PC-9 (cell line): ENCODE measurements at regions of chr20 and their contacts with region 1.

Region 1: GRCh38 chr20:48904365-48905296 is 16.9 kb upstream of the ARFGEF2 start:
- DNase-seq: peak; percentile 75
- H3K4me3 ChIP-seq: no peak overlapping the region
- H3K27ac ChIP-seq: no peak overlapping the region
- H3K4me1 ChIP-seq: peaks cover 24% of the 10 kb centered on the region
- H3K27me3 ChIP-seq: no peaks in the 10 kb centered on the region
- CTCF ChIP-seq: peak; percentile 98

Region 2: GRCh38 chr20:47438577-47439381 is 1465.9 kb before region 1 on chr20:
- CTCF ChIA-PET with region 1: interaction called, 27 read pairs
- POLR2A ChIA-PET with region 1: no interaction called
- intact Hi-C with region 1: no loop called
- DNase-seq: peak; percentile 67 to 94
- H3K4me3 ChIP-seq: 0 out of 2 replicates have a peak overlapping the region, but pooled peaks have one; percentile 1
- H3K27ac ChIP-seq: peak overlapping the region; percentile 78
- H3K4me1 ChIP-seq: peaks cover 58% of the 10 kb centered on the region
- H3K27me3 ChIP-seq: no peaks in the 10 kb centered on the region
- CTCF ChIP-seq: no peak

Region 3: DNA sequence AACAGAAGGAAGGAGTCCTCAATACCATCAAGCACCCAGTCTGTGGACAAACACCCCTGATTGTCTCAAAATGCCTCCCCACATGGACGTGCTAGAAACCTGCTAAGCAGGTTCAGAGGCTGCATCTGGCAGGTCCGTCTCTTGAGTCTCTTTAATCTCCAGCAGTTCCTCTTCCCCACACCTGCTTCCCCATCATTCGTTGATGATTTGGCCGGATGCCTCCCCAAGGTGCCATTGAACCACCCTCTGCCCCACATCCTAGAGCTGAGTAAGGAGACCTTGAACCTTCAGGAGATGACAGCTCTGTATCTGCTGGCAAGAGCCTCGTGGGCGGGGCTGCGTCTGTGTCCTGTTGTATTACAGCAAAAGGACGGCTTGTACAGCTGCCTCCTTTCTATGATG is 256.1 kb before region 1 on chr20:
- CTCF ChIA-PET with region 1: interaction called, 3 read pairs
- POLR2A ChIA-PET with region 1: interaction called, 13 read pairs
- intact Hi-C with region 1: no loop called
- DNase-seq: peak; percentile 50 to 74
- H3K4me3 ChIP-seq: no peak overlapping the region
- H3K27ac ChIP-seq: no peak overlapping the region
- H3K4me1 ChIP-seq: peaks cover 12% of the 10 kb centered on the region
- H3K27me3 ChIP-seq: no peaks in the 10 kb centered on the region
- CTCF ChIP-seq: no peak

Region 4: GRCh38 chr20:48674461-48674860 is 230.2 kb before region 1 on chr20:
- CTCF ChIA-PET with region 1: no interaction called
- POLR2A ChIA-PET with region 1: interaction called, 10 read pairs
- intact Hi-C with region 1: no loop called
- DNase-seq: no peak
- H3K4me3 ChIP-seq: no peak overlapping the region
- H3K27ac ChIP-seq: no peak overlapping the region
- H3K4me1 ChIP-seq: no peaks in the 10 kb centered on the region; the same call in 1 of the 2 replicates
- H3K27me3 ChIP-seq: peaks cover 18% of the 10 kb centered on the region
- CTCF ChIP-seq: no peak

Region 5: DNA sequence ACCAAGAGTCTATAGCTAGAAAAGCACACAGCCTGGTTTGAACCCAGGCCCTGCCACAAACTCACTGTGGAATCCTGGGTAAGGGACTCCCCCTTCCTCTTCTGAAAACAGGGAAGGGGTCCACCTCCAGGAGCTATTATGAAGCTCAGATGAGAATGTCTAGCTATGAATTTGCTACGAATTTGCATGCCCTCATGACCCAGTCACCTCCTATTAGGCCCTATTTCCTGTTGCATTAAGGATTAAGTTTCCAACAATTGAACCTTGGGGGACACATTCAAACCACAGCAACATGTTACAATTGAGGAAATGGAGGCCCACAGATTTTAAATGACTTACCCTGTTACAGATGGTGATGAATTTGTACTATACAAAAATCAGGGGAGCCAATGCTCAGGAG is 123.0 kb before region 1 on chr20:
- CTCF ChIA-PET with region 1: no interaction called
- POLR2A ChIA-PET with region 1: no interaction called
- intact Hi-C with region 1: no loop called
- DNase-seq: no peak
- H3K4me3 ChIP-seq: no peak overlapping the region
- H3K27ac ChIP-seq: no peak overlapping the region
- H3K4me1 ChIP-seq: no peaks in the 10 kb centered on the region
- H3K27me3 ChIP-seq: peaks cover 16% of the 10 kb centered on the region; the same call in 1 of the 2 replicates
- CTCF ChIP-seq: no peak

Region 6: DNA sequence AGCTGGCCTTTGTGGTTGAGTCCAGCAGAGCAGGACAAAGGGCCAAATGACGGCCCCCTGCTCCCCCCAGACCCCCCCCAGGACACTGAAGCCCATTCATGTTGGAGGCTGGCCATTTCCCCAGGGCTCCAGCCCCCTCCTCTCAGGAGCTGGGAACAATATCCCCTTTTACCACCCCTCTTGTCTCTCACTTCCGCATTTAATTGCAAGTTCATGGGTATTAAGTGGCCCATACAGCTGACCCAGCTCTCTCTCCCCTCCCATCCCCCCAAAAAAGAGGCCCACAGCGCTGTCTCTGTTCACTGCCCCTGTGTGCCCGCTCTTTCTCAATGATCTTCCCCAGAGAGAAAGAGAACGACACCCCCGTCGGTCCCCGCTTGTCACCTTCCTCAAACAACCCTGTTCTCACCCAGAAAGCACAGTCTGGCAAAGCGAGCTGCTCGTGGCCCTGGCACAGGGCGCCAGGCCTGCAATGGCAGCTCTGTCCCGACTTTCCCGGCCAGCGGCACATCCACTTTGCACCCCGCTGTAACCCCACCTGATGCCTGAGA is 107.3 kb before region 1 on chr20:
- CTCF ChIA-PET with region 1: interaction called, 14 read pairs
- POLR2A ChIA-PET with region 1: no interaction called
- intact Hi-C with region 1: no loop called
- DNase-seq: no peak
- H3K4me3 ChIP-seq: no peak overlapping the region
- H3K27ac ChIP-seq: no peak overlapping the region
- H3K4me1 ChIP-seq: no peaks in the 10 kb centered on the region
- H3K27me3 ChIP-seq: no peaks in the 10 kb centered on the region
- CTCF ChIP-seq: no peak

Region 7: GRCh38 chr20:48921151-48921898 is 16.7 kb after region 1 on chr20 and contains the start of gene ARFGEF2:
- CTCF ChIA-PET with region 1: no interaction called
- POLR2A ChIA-PET with region 1: no interaction called
- intact Hi-C with region 1: no loop called
- DNase-seq: peak; percentile 82 to 97
- H3K4me3 ChIP-seq: peak within 1 kb of the TSS; percentile 65
- H3K27ac ChIP-seq: peak within 1 kb of the TSS; percentile 90
- H3K4me1 ChIP-seq: peaks cover 36% of the 10 kb centered on the region
- H3K27me3 ChIP-seq: no peaks in the 10 kb centered on the region
- CTCF ChIP-seq: peak; percentile 7; the same call in 1 of the 2 replicates
- total RNA-seq, gene ARFGEF2: 39.9 and 47.0 TPM in 2 replicates

Region 8: GRCh38 chr20:48970551-48971365 is 66.1 kb after region 1 on chr20:
- CTCF ChIA-PET with region 1: no interaction called
- POLR2A ChIA-PET with region 1: no interaction called
- intact Hi-C with region 1: no loop called
- DNase-seq: no peak
- H3K4me3 ChIP-seq: no peak overlapping the region
- H3K27ac ChIP-seq: no peak overlapping the region
- H3K4me1 ChIP-seq: no peaks in the 10 kb centered on the region
- H3K27me3 ChIP-seq: no peaks in the 10 kb centered on the region
- CTCF ChIP-seq: no peak